Sigmoid colon (tissue), 7 donors: ENCODE measurements at regions of chr18 and their contacts with region 1.

Region 1: GRCh38 chr18:32695534-32695933 is 77.3 kb downstream of the KLHL14 start:
- DNase-seq: no peak
- H3K4me3 ChIP-seq: no peak overlapping the region
- H3K27ac ChIP-seq: no peak overlapping the region
- H3K4me1 ChIP-seq: no peaks in the 10 kb centered on the region
- H3K27me3 ChIP-seq: no peaks in the 10 kb centered on the region
- CTCF ChIP-seq: no peak
- EP300 ChIP-seq: no peak
- POLR2A ChIP-seq: no peak

Region 2: DNA sequence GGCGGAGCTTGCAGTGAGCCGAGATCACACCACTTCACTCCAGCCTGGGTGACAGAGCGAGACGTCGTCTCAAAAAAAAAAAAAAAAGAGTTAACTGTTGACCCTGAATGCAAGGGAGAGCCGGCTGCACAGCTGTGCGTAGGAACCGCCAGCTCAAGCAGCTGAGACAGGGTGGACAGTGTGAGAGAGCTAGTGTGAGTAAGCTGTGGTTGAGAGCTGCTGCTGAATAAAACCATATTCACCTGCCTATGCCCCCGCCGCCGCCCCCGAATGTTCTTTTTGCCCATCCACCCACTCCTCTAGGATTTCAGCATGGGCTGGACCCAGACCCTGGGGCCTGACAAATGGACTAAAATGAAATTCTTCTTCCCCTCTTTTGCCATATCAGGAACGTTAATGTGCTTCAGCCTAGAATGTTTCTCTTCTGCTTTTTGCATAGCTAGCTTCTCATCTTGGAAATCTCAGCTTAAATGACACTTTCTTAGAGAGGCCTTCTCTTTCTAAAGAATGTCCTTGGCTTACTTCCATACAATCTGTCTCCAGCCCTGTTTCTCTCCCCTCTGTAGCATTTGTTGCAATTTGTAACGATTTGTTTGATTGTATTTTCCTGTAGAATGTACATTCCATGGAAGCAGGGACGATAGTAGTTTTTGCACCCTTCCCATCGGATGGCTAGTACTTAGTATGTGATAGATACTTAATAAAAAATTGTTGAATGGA is 65.4 kb before region 1 on chr18:
- intact Hi-C with region 1: loop called (anchors 10 kb)
- DNase-seq: no peak
- H3K4me3 ChIP-seq: no peak overlapping the region
- H3K27ac ChIP-seq: no peak overlapping the region
- H3K4me1 ChIP-seq: no peaks in the 10 kb centered on the region
- H3K27me3 ChIP-seq: no peaks in the 10 kb centered on the region
- CTCF ChIP-seq: no peak
- EP300 ChIP-seq: no peak
- POLR2A ChIP-seq: no peak

Region 3: GRCh38 chr18:32683037-32683436 is 12.5 kb before region 1 on chr18:
- intact Hi-C with region 1: no loop called
- DNase-seq: no peak
- H3K4me3 ChIP-seq: no peak overlapping the region
- H3K27ac ChIP-seq: no peak overlapping the region
- H3K4me1 ChIP-seq: no peaks in the 10 kb centered on the region
- H3K27me3 ChIP-seq: no peaks in the 10 kb centered on the region
- CTCF ChIP-seq: no peak
- EP300 ChIP-seq: no peak
- POLR2A ChIP-seq: no peak